Heart left ventricle (tissue), 16 donors: ENCODE measurements at regions of chr5 and their contacts with region 1.

Region 1: DNA sequence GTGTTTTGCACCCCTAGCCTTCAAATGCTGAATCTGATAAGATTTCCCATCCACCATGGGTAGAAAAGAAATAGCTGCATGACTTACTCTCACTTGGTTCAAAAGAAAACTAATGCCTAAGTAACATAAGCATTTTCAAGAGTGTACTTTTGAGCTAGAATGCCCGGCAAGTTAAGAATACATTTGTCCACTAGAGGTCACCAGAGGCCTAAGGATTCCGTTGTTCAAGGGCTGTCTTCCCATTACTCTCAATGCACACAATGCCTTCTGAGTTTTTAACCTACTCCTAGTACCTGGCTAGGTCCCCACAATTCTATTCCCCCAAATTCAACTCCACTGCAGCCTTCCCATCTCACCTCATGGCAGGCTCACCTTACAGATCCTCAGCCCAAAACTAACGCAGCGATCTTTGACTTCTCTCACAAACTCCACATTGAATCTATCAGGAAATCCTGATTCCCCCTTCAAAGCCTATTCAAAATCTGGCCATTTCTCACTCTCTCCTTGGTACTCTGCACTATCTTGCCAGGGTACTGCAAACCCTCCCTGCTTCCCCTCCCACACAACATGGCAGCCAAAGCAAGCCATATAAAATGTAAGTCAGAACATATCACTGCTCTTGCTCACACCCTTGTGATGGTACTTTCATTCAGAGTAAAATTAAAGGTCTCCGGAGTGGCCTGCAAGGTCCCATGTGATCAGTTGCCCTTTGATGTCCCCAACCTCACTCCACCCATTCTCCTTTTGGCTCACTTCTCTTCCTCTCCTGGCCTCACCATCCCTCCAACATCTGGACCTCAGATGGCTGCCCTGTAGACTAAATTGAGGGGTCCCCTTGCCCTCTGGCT is 13.4 kb downstream of the OXCT1 start:
- DNase-seq: peak in 2 of 5 donors; percentile 46 to 51
- ATAC-seq: peak; percentile 78 to 85 (median 84)
- H3K4me3 ChIP-seq: no peak overlapping the region
- H3K27ac ChIP-seq: no peak overlapping the region
- H3K4me1 ChIP-seq: peaks cover 0 to 6% (median 0%) of the 10 kb centered on the region in 12 donors
- H3K27me3 ChIP-seq: no peaks in the 10 kb centered on the region
- CTCF ChIP-seq: peak; percentile 72 to 85 (median 78)
- POLR2A ChIP-seq: no peak

Region 2: DNA sequence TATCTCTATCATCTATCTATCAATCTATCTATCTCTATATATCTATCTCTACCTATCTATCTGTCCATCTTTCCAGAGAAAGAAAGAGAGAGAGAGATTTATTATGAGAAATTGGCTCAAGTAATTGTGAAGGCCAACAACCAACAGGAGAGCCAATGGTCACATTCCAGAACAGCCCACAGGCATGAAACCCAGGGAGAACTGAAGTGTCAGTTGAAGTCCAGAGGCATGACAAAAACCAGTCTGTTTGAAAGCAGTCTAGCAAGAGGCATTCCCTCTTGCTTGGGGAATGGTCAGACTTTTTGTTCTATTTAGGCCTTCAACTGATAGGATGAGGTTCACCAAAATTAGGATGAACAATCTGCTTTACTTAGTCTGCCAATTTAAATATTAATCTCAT is 258.9 kb before region 1 on chr5:
- intact Hi-C with region 1: no loop called
- DNase-seq: no peak
- ATAC-seq: no peak
- H3K4me3 ChIP-seq: no peak overlapping the region
- H3K27ac ChIP-seq: no peak overlapping the region
- H3K4me1 ChIP-seq: no peaks in the 10 kb centered on the region
- H3K27me3 ChIP-seq: no peaks in the 10 kb centered on the region
- CTCF ChIP-seq: no peak
- POLR2A ChIP-seq: no peak

Region 3: GRCh38 chr5:41617843-41618515 is 238.9 kb before region 1 on chr5:
- intact Hi-C with region 1: no loop called
- DNase-seq: no peak
- ATAC-seq: no peak
- H3K4me3 ChIP-seq: no peak overlapping the region
- H3K27ac ChIP-seq: no peak overlapping the region
- H3K4me1 ChIP-seq: peaks cover 0 to 4% (median 0%) of the 10 kb centered on the region in 12 donors
- H3K27me3 ChIP-seq: no peaks in the 10 kb centered on the region
- CTCF ChIP-seq: no peak
- POLR2A ChIP-seq: no peak

Region 4: GRCh38 chr5:41835645-41836044 is 21.2 kb before region 1 on chr5:
- intact Hi-C with region 1: no loop called
- DNase-seq: peak; percentile 55 to 84 (median 64)
- ATAC-seq: peak; percentile 94 to 97 (median 96)
- H3K4me3 ChIP-seq: no peak overlapping the region
- H3K27ac ChIP-seq: peak overlapping the region in 11 of 12 donors; percentile 1 to 85 (median 65)
- H3K4me1 ChIP-seq: peaks cover 0 to 28% (median 15%) of the 10 kb centered on the region in 12 donors
- H3K27me3 ChIP-seq: no peaks in the 10 kb centered on the region
- CTCF ChIP-seq: no peak
- POLR2A ChIP-seq: no peak

Region 5: GRCh38 chr5:41924872-41925554 is 68.1 kb after region 1 on chr5 and contains the start of gene FBXO4:
- intact Hi-C with region 1: loop called in 5 of 10 experiments (anchors 2 to 5 kb)
- DNase-seq: peak; percentile 85 to 93 (median 91)
- ATAC-seq: peak; percentile 96 to 99 (median 98)
- H3K4me3 ChIP-seq: peak within 1 kb of the TSS; percentile 63 to 93 (median 82)
- H3K27ac ChIP-seq: peak within 1 kb of the TSS; percentile 84 to 98 (median 96)
- H3K4me1 ChIP-seq: peaks cover 0 to 25% (median 11%) of the 10 kb centered on the region in 12 donors
- H3K27me3 ChIP-seq: no peaks in the 10 kb centered on the region
- CTCF ChIP-seq: peak; percentile 38 to 85 (median 56)
- POLR2A ChIP-seq: peak in 1 of 2 donors; percentile 42
- total RNA-seq, gene FBXO4: 2.4 to 8.1 (median 3.4) TPM

Region 6: DNA sequence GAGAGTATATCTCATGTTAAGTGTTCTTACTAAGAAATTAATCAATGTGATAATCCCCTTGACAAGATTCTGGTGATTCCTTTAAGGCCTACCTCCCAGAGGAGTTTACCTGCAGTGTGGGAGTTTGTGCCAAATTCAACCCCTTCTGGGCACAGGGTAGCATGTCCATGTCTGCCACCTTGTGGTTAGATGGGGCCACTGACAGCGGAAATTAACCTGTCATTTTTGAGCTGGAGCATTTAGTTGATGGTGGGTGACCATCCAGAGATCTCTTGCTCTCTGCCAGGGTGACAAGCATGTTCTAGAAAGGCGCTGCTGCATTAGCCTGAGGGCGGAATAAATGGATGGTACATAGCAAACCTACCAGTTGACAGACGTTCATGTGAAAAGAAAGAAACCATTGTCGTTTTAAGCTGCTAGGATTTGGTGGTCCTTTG is 200.4 kb after region 1 on chr5:
- intact Hi-C with region 1: loop called (anchors 2 to 5 kb)
- DNase-seq: no peak
- ATAC-seq: peak in 2 of 4 donors; percentile 47 to 69
- H3K4me3 ChIP-seq: no peak overlapping the region
- H3K27ac ChIP-seq: no peak overlapping the region
- H3K4me1 ChIP-seq: no peaks in the 10 kb centered on the region
- H3K27me3 ChIP-seq: no peaks in the 10 kb centered on the region
- CTCF ChIP-seq: peak; percentile 43 to 71 (median 64)
- POLR2A ChIP-seq: no peak

Region 7: GRCh38 chr5:42121401-42121800 is 264.5 kb after region 1 on chr5:
- intact Hi-C with region 1: no loop called
- DNase-seq: no peak
- ATAC-seq: no peak
- H3K4me3 ChIP-seq: no peak overlapping the region
- H3K27ac ChIP-seq: no peak overlapping the region
- H3K4me1 ChIP-seq: no peaks in the 10 kb centered on the region
- H3K27me3 ChIP-seq: no peaks in the 10 kb centered on the region
- CTCF ChIP-seq: no peak
- POLR2A ChIP-seq: no peak

Region 8: DNA sequence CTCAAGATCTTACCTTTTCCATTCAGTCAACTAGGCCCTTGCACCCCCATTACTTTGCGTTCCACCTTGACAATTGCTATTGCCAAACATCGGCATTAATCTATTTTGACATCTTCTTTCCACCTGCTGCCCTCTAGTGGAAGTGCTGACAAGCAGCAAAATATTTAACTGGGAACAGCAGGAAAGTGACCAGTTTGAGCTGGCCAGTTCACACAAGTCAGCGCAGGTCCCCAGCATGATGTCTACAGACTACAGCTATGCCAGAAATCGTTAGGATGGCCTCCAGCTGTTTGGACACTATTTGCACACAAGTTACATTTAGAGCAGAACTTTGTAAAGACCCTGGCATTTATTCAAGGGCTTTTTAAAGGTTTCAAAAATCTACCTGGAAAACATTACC is 726.5 kb after region 1 on chr5:
- intact Hi-C with region 1: loop called in 3 of 10 experiments (anchors 5 to 10 kb)
- DNase-seq: peak in 4 of 5 donors; percentile 34 to 62 (median 57)
- ATAC-seq: peak in 3 of 4 donors; percentile 21 to 50 (median 45)
- H3K4me3 ChIP-seq: no peak overlapping the region
- H3K27ac ChIP-seq: no peak overlapping the region
- H3K4me1 ChIP-seq: peaks cover 0 to 47% (median 22%) of the 10 kb centered on the region in 12 donors
- H3K27me3 ChIP-seq: no peaks in the 10 kb centered on the region
- CTCF ChIP-seq: peak; percentile 64 to 93 (median 80)
- POLR2A ChIP-seq: no peak

Region 9: DNA sequence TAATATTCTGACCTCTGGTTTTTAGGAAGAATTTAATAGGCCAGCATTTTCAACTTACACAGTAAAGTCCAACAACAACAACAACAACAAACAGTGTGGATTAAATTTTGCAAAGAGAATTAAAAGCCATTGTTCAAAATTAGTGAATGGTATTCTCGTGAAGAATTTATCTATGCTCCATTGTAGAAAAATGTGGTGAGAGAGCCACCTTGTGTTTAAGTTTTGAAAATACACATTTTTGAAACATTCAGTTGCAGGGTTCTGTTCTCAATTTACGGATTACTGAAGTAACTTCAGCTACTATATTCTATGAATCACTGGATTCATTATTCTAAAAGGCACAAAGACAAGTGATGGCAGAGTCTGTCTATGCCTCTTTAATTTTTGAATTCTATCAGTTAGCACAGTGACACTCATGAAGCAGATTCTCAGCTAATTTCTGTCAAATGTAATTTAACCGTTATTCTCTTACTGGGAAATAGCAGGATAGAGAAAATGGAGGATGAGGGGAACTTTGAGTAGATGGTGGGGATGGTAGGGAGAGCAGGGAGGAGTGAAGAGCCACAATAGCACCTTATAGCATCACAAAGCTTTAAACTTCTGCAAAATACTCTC is 910.7 kb after region 1 on chr5:
- intact Hi-C with region 1: loop called (anchors 2 to 5 kb)
- DNase-seq: no peak
- ATAC-seq: peak in 1 of 4 donors; percentile 52
- H3K4me3 ChIP-seq: no peak overlapping the region
- H3K27ac ChIP-seq: no peak overlapping the region
- H3K4me1 ChIP-seq: peaks cover 0 to 4% (median 0%) of the 10 kb centered on the region in 12 donors
- H3K27me3 ChIP-seq: no peaks in the 10 kb centered on the region
- CTCF ChIP-seq: peak; percentile 27 to 71 (median 58)
- POLR2A ChIP-seq: no peak